Activated CD4-positive, alpha-beta memory T cell treated with anti-CD3 and anti-CD28 coated beads for 36 hours (primary cell): ENCODE measurements at regions of chr20 and their contacts with region 1.

Region 1: DNA sequence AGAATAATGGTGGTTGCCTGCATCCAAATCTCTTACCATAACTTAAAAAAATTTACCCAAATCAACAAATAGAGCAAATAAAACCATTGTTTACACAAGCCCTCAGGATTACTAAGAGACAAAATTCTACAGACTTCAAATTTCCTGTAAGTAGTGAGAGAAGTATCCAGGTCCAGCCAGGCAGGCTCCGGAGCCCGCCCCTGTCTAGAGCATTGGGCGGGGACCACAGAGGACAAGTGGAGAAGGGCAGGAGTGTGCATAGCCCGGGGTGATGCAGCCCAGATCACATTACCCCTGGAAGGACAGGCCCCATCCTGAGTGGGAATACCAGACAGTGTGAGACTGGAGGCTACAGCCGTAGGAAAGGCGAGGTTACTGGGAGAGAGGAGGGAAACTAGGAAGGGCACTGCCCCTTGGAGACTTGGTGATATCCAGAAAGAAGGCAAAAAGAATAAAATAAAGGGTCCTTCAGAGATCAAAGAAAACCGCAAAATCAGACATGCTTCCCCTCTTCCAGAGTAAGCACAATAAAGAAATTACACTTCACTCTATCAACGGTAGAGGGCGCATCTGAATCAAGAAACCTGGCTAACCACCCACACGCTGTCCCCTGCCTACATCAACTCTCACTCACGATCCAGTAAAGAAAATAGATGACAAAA is 26.6 kb downstream of the RIN2 start:
- DNase-seq: peak; percentile 54
- H3K4me3 Mint-ChIP-seq: no peak overlapping the region
- H3K27ac Mint-ChIP-seq: no peak overlapping the region
- H3K4me1 Mint-ChIP-seq: peaks cover 3% of the 10 kb centered on the region
- H3K27me3 Mint-ChIP-seq: peaks cover 12% of the 10 kb centered on the region

Region 2: DNA sequence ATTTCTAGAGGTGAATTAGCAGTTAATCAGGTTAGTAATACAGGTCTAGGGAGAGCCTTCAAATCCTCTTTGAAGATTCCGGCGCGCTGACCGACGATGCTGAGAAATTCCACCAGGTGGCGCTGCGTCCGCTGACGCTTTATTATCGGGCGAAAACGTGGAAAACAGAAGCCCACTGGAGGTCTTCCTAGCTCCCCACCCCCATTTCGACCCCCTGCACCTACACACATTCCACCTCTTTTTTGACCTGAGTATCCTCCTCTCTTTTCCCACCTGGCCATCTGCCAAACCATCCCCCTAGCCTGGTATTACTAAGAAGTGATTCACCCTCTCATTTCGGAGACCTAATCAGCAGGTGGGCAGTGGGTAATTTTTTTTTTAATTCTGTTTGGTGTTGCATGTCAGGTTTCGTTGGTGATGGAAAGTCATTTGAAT is 91.9 kb before region 1 on chr20:
- CTCF ChIA-PET with region 1: interaction called, 5 read pairs
- POLR2A ChIA-PET with region 1: no interaction called
- intact Hi-C with region 1: loop called (anchors 10 kb)
- DNase-seq: peak; percentile 60
- H3K4me3 Mint-ChIP-seq: no peak overlapping the region
- H3K27ac Mint-ChIP-seq: no peak overlapping the region
- H3K4me1 Mint-ChIP-seq: peaks cover 4% of the 10 kb centered on the region
- H3K27me3 Mint-ChIP-seq: peaks cover 23% of the 10 kb centered on the region

Region 3: GRCh38 chr20:19828232-19828631 is 43.6 kb after region 1 on chr20:
- CTCF ChIA-PET with region 1: interaction called, 3 read pairs
- POLR2A ChIA-PET with region 1: no interaction called
- intact Hi-C with region 1: loop called (anchors 2 kb)
- DNase-seq: peak; percentile 63
- H3K4me3 Mint-ChIP-seq: no peak overlapping the region
- H3K27ac Mint-ChIP-seq: peak overlapping the region; percentile 60
- H3K4me1 Mint-ChIP-seq: peaks cover 24% of the 10 kb centered on the region
- H3K27me3 Mint-ChIP-seq: peaks cover 5% of the 10 kb centered on the region

Region 4: GRCh38 chr20:19995220-19995863 is 210.7 kb after region 1 on chr20:
- CTCF ChIA-PET with region 1: interaction called, 19 read pairs
- POLR2A ChIA-PET with region 1: no interaction called
- intact Hi-C with region 1: loop called (anchors 1 kb)
- DNase-seq: peak; percentile 47
- H3K4me3 Mint-ChIP-seq: no peak overlapping the region
- H3K27ac Mint-ChIP-seq: no peak overlapping the region
- H3K4me1 Mint-ChIP-seq: no peaks in the 10 kb centered on the region
- H3K27me3 Mint-ChIP-seq: peaks cover 8% of the 10 kb centered on the region